ENCODE measurements at regions of chr3 and their contacts with region 1.

Region 1: DNA sequence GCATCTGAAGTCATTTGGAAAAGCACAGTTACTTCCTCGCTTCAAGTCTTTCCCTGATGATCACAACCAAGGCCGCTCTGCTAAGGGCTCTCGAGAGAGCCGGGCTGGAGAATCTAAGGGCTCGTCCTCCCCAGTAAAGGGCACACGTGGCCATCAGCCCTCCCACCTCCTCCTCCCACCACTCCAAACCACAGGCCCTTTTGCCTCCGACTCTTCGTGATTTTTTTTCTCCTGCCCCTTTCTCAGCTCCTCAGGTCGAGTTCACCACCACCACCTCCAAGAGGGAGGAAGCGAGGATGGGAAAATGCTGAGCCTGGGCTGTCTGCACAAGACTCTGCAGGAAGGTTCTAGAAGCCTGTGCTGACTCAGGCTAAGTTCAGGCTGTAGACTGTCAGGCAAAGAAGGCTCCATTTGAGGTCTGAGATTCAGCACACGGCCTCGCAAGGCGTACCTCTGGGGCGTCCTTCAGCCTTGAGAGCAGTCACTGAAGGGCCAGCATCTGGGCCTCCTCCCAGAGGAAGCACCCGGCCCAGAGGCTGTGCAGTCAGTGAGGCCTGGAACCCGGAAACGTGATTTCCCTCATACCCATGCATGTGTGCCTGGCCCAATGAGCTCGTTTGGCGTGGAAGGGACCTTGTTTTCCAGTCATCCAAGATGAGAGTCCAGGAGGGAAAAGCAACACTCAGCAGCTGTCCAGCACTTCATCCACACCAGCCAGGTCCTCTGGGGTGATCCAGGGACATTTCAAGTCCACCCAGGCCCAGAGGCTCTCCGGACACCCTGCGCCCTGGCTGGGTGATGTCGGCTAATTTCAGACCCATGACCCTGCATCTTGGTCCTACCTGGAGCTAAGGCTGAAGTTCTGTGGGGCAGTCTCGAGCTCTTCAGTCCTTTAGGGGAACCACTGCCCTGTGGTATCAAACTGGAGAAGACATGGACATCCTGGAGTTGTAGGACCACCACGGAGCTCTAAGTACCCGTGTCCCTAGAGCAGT is 196.8 kb downstream of the XXYLT1 start:
- DNase-seq: peak in 1 of 2 experiments; percentile 20
- H3K4me3 ChIP-seq: no peak overlapping the region
- H3K4me3 Mint-ChIP-seq: no peak overlapping the region
- H3K27ac Mint-ChIP-seq: no peak overlapping the region
- H3K4me1 ChIP-seq: peaks cover 41% of the 10 kb centered on the region
- H3K4me1 Mint-ChIP-seq: peaks cover 29% of the 10 kb centered on the region
- H3K27me3 ChIP-seq: no peaks in the 10 kb centered on the region
- H3K27me3 Mint-ChIP-seq: no peaks in the 10 kb centered on the region
- CTCF ChIP-seq: no peak

Region 2: GRCh38 chr3:194990454-194991337 is 83.5 kb before region 1 on chr3:
- CTCF ChIA-PET with region 1: no interaction called
- POLR2A ChIA-PET with region 1: no interaction called
- intact Hi-C with region 1: no loop called
- DNase-seq: no peak
- H3K4me3 ChIP-seq: no peak overlapping the region
- H3K4me3 Mint-ChIP-seq: no peak overlapping the region
- H3K27ac Mint-ChIP-seq: no peak overlapping the region
- H3K4me1 ChIP-seq: peaks cover 12% of the 10 kb centered on the region
- H3K4me1 Mint-ChIP-seq: no peaks in the 10 kb centered on the region
- H3K27me3 ChIP-seq: no peaks in the 10 kb centered on the region
- H3K27me3 Mint-ChIP-seq: no peaks in the 10 kb centered on the region
- CTCF ChIP-seq: no peak

Region 3: GRCh38 chr3:195001961-195002861 is 72.0 kb before region 1 on chr3:
- CTCF ChIA-PET with region 1: no interaction called
- POLR2A ChIA-PET with region 1: no interaction called
- intact Hi-C with region 1: loop called (anchors 2 kb)
- DNase-seq: peak; percentile 73 to 74
- H3K4me3 ChIP-seq: no peak overlapping the region
- H3K4me3 Mint-ChIP-seq: no peak overlapping the region
- H3K27ac Mint-ChIP-seq: no peak overlapping the region
- H3K4me1 ChIP-seq: peaks cover 6% of the 10 kb centered on the region; the same call in 1 of the 2 replicates
- H3K4me1 Mint-ChIP-seq: no peaks in the 10 kb centered on the region
- H3K27me3 ChIP-seq: no peaks in the 10 kb centered on the region
- H3K27me3 Mint-ChIP-seq: no peaks in the 10 kb centered on the region
- CTCF ChIP-seq: peak; percentile 41 to 85

Region 4: GRCh38 chr3:195030791-195031321 is 43.3 kb before region 1 on chr3:
- CTCF ChIA-PET with region 1: no interaction called
- POLR2A ChIA-PET with region 1: no interaction called
- intact Hi-C with region 1: loop called (anchors 5 kb)
- DNase-seq: peak; percentile 53 to 72
- H3K4me3 ChIP-seq: no peak overlapping the region
- H3K4me3 Mint-ChIP-seq: no peak overlapping the region
- H3K27ac Mint-ChIP-seq: peak overlapping the region; percentile 39
- H3K4me1 ChIP-seq: peaks cover 47% of the 10 kb centered on the region
- H3K4me1 Mint-ChIP-seq: peaks cover 26% of the 10 kb centered on the region
- H3K27me3 ChIP-seq: no peaks in the 10 kb centered on the region
- H3K27me3 Mint-ChIP-seq: no peaks in the 10 kb centered on the region
- CTCF ChIP-seq: no peak

Measured in Caco-2 (cell line).